ENCODE measurements at regions of chr11 and their contacts with region 1.

Region 1: GRCh38 chr11:2298795-2299761 is 2.6 kb downstream of the C11orf21 start:
- DNase-seq: no peak
- H3K4me3 Mint-ChIP-seq: peak overlapping the region; percentile 70
- H3K27ac Mint-ChIP-seq: no peak overlapping the region
- H3K4me1 Mint-ChIP-seq: peaks cover 20% of the 10 kb centered on the region
- H3K27me3 Mint-ChIP-seq: peaks cover 3% of the 10 kb centered on the region

Region 2: DNA sequence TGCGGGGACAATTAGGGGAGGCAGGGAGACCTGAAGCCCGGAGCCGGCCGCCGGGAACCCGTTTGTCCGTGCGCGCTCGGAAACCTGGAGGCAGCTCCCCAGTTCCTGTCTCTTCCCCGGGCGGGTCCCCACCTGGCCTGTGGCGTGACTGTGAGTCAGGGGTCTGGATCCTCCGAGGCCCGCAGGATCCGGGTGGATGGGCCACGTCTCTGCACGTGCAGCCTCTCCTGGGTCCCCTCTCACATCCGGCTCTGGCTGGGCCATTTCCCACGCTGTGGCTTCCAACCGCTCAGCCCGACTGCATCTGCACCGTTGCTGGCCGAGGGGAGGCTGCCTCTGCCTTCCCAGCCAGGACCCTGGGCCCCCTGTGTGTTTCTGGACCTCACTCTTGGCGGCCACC is 286.6 kb before region 1 on chr11:
- intact Hi-C with region 1: no loop called
- DNase-seq: no peak
- H3K4me3 Mint-ChIP-seq: no peak overlapping the region
- H3K27ac Mint-ChIP-seq: no peak overlapping the region
- H3K4me1 Mint-ChIP-seq: no peaks in the 10 kb centered on the region
- H3K27me3 Mint-ChIP-seq: no peaks in the 10 kb centered on the region

Region 3: GRCh38 chr11:2137202-2138071 is 161.6 kb before region 1 on chr11:
- intact Hi-C with region 1: no loop called
- DNase-seq: no peak
- H3K4me3 Mint-ChIP-seq: no peak overlapping the region
- H3K27ac Mint-ChIP-seq: peak overlapping the region; percentile 34
- H3K4me1 Mint-ChIP-seq: peaks cover 3% of the 10 kb centered on the region
- H3K27me3 Mint-ChIP-seq: peaks cover 57% of the 10 kb centered on the region

Region 4: GRCh38 chr11:2196970-2197770 is 101.9 kb before region 1 on chr11:
- intact Hi-C with region 1: loop called (anchors 1 kb)
- DNase-seq: peak; percentile 91
- H3K4me3 Mint-ChIP-seq: no peak overlapping the region
- H3K27ac Mint-ChIP-seq: no peak overlapping the region
- H3K4me1 Mint-ChIP-seq: peaks cover 9% of the 10 kb centered on the region
- H3K27me3 Mint-ChIP-seq: peaks cover 11% of the 10 kb centered on the region

Region 5: DNA sequence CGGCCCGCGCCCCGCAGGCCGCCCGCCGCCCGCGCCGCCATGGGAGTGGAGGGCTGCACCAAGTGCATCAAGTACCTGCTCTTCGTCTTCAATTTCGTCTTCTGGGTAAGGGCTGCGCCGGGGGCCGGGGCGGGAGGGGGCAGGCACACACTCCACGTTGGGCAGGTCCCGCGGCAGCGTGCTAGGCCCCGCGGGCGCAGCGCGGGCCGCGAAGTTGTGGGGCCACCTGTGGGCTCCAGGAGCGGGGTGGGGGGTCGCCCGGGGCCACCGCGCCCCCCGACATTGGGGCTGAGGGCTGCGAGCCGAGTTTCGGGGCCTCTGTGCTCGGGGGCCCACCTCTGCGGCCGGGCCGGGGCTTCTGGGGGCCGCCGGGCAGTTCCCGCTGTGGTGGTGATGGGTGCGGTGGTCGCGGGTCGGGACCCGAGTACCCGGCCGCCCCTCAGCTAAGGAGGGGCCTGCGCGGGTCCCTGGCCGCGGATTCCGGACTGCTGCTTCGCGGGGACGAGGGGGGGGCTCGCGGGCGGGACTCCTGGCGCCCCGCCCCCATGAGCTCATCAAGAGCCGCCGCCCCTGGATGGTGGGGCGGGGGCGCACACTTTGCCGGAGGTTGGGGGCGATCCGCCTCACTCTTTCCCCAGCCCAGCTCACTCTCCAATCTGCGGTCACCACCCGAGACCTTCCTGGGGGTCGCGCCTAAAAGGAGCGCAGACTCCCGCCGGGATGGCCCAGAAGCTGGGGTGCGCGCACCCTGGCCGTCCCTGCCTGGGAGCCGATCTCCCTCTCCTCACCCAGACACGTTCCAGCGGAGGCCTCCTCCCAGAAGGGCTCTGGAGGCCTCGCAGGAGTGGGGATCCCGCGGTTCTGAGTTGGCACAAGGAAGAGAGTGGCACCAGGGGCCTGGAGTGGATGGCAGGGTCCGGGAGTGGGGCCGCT is 78.7 kb after region 1 on chr11:
- intact Hi-C with region 1: loop called (anchors 5 kb)
- DNase-seq: peak; percentile 87
- H3K4me3 Mint-ChIP-seq: peak overlapping the region; percentile 93
- H3K27ac Mint-ChIP-seq: peak overlapping the region; percentile 86
- H3K4me1 Mint-ChIP-seq: peaks cover 18% of the 10 kb centered on the region
- H3K27me3 Mint-ChIP-seq: peaks cover 2% of the 10 kb centered on the region